ENCODE measurements at regions of chr10 and their contacts with region 1.

Region 1: GRCh38 chr10:62437696-62438095 is 63.5 kb downstream of the ZNF365 start:
- DNase-seq: peak; percentile 38 to 42
- H3K4me3 ChIP-seq: no peak overlapping the region
- H3K4me1 ChIP-seq: no peaks in the 10 kb centered on the region
- H3K27me3 ChIP-seq: no peaks in the 10 kb centered on the region

Region 2: DNA sequence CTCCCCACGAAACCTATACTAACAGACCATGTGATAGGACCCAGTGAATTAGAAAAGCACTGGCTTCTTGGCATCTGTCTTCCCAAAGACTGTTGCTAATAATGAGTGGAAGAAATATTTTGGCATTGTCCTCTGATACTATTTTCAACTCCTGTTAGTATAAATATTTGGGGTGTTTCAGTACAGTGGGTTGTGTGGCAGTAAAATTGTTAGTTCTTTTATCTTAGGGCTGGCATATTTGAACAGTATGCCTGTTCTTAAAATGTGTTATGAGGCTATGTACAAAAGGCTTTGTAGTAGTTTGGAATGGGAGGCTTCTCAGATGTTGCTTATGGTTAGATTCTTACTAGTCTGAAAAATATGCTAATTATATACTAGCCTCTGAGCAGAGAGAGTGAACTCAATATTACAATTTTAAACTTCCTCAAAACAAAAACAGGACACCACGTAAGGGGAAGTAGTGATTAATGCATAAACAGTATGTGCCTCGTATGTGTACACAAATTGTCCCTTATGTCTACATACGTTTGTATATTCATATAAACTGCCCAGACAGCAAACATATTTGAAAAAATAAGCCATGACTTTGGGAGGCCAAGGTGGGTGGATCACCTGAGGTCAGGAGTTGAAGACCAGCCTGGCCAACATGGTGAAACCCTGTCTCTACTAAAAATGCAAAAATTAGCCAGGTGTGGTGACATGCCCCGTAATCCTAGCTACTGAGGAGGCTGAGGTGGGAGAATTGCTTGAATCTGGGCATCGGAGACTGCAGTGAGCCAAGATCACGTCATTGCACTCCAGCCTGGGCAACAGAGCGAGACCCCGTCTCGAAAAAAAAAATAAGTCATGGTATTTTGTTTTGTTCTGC is 420.8 kb before region 1 on chr10:
- in situ Hi-C with region 1: no loop called
- DNase-seq: no peak
- H3K4me3 ChIP-seq: no peak overlapping the region
- H3K4me1 ChIP-seq: peaks cover 34% of the 10 kb centered on the region
- H3K27me3 ChIP-seq: no peaks in the 10 kb centered on the region

Region 3: GRCh38 chr10:62335326-62335725 is 102.4 kb before region 1 on chr10:
- in situ Hi-C with region 1: no loop called
- DNase-seq: no peak
- H3K4me3 ChIP-seq: no peak overlapping the region
- H3K4me1 ChIP-seq: no peaks in the 10 kb centered on the region
- H3K27me3 ChIP-seq: no peaks in the 10 kb centered on the region; the same call in 1 of the 2 replicates

Region 4: DNA sequence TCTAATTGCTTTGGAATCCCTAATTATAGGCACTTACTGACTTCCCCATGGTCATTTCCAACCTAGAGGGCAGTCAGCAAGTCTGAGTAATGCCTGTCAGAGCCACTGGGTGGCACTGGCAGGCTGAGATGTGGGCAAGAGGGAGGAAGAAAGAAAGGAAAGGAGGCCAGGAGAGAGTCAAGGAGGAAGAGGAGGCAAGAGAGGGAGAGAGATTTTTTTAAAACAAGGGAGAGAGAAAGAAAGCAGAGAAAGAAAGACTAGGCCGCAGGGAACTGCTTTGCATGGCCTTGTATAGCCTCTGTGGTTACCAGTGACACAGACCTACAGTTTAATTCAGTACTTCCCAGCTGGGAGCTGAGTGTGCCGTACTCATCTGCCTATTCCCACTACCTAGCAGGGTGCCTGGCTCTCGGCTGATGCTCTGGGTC is 156.4 kb after region 1 on chr10:
- in situ Hi-C with region 1: loop called (anchors 10 kb)
- DNase-seq: peak; percentile 62 to 71
- H3K4me3 ChIP-seq: no peak overlapping the region
- H3K4me1 ChIP-seq: no peaks in the 10 kb centered on the region
- H3K27me3 ChIP-seq: peaks cover 11% of the 10 kb centered on the region

Measured in HAP-1 (cell line).